AG04449 (cell line): ENCODE measurements at regions of chr1 and their contacts with region 1.

Region 1: DNA sequence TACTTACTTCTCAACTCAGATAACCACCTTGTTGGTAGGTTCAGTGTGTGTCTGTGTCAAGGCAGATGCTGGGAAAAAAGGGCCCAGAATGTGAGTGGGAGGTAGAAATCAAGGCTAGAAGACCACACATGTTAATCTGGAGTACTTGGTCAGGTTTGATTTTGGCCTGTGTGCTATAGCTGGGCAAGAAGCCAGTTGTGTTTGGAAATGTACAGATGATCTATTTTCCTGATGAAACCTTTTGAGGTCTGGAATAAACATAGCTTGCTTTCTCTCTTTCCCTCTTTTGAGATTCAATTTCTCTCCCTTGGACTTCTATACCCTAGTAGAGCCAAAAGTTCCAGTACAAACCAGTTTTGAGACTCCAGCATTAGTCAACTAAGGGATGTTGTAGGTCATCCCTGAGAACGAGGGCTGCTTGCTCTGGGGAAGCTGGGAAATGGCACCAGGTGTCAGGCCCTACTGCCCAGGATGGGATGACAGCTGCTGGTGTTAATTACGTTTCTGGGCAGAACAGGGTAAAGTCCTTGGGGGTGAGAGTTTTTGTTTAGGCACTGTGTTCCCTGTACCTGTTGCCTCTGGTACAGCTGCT is 15.8 kb downstream of the MAPKAPK2 start:
- DNase-seq: no peak
- H3K4me3 ChIP-seq: no peak overlapping the region
- CTCF ChIP-seq: no peak

Region 2: GRCh38 chr1:206684478-206685333 is 15.8 kb before region 1 on chr1 and contains the start of gene MAPKAPK2:
- CTCF ChIA-PET with region 1: interaction called, 12 read pairs
- POLR2A ChIA-PET with region 1: interaction called, 3 read pairs
- DNase-seq: no peak
- H3K4me3 ChIP-seq: peak within 1 kb of the TSS; percentile 81
- CTCF ChIP-seq: no peak